ENCODE measurements at regions of chr3 and their contacts with region 1.

Region 1: GRCh38 chr3:68876112-68876713 is 56.1 kb downstream of the TAFA4 start:
- DNase-seq: peak in 3 of 10 donors; percentile 12 to 27 (median 19)

Region 2: GRCh38 chr3:66938338-66938963 is 1937.8 kb before region 1 on chr3:
- intact Hi-C with region 1: loop called (anchors 10 kb)
- DNase-seq: peak in 3 of 10 donors; percentile 29 to 31 (median 29)

Region 3: GRCh38 chr3:67113802-67114407 is 1762.3 kb before region 1 on chr3:
- intact Hi-C with region 1: loop called (anchors 5 kb)
- DNase-seq: peak; percentile 56 to 95 (median 79)

Region 4: GRCh38 chr3:68817243-68817642 is 59.0 kb before region 1 on chr3:
- intact Hi-C with region 1: no loop called
- DNase-seq: no peak

Region 5: GRCh38 chr3:68953816-68954444 is 77.7 kb after region 1 on chr3:
- intact Hi-C with region 1: no loop called
- DNase-seq: no peak

Region 6: GRCh38 chr3:69013253-69014021 is 137.2 kb after region 1 on chr3 and contains the start of gene EOGT:
- intact Hi-C with region 1: no loop called
- DNase-seq: peak; percentile 76 to 97 (median 82)

Measured in posterior cingulate gyrus (tissue), 11 donors.